Naive thymus-derived CD4-positive, alpha-beta T cell (primary cell): ENCODE measurements at regions of chr1 and their contacts with region 1.

Region 1: GRCh38 chr1:205812878-205813754 is at the start of gene SLC41A1:
- DNase-seq: peak; percentile 71 to 96 (median 91)
- ATAC-seq: peak; percentile 98
- H3K4me3 ChIP-seq: peak within 1 kb of the TSS; percentile 69
- H3K4me3 Mint-ChIP-seq: peak within 1 kb of the TSS; percentile 88 to 94 (median 92)
- H3K27ac ChIP-seq: peak within 1 kb of the TSS; percentile 87
- H3K27ac Mint-ChIP-seq: peak within 1 kb of the TSS; percentile 79 to 97 (median 92)
- H3K4me1 ChIP-seq: peaks cover 23 to 36% of the 10 kb centered on the region in 2 donors
- H3K4me1 Mint-ChIP-seq: peaks cover 38 to 63% (median 60%) of the 10 kb centered on the region in 7 donors
- H3K27me3 ChIP-seq: no peaks in the 10 kb centered on the region
- H3K27me3 Mint-ChIP-seq: peaks cover 0 to 15% (median 0%) of the 10 kb centered on the region in 5 donors
- total RNA-seq, gene SLC41A1: 16.5 to 32.0 (median 27.8) TPM

Region 2: GRCh38 chr1:205849619-205850355 is 36.7 kb after region 1 on chr1 and contains the start of gene PM20D1:
- CTCF ChIA-PET with region 1: interaction called, 3 read pairs
- POLR2A ChIA-PET with region 1: interaction called, 8 read pairs
- intact Hi-C with region 1: loop called (anchors 1 to 2 kb)
- DNase-seq: peak; percentile 48 to 90 (median 85)
- ATAC-seq: peak; percentile 98
- H3K4me3 ChIP-seq: peak within 1 kb of the TSS; percentile 31
- H3K4me3 Mint-ChIP-seq: peak within 1 kb of the TSS; percentile 83 to 98 (median 96)
- H3K27ac ChIP-seq: peak within 1 kb of the TSS; percentile 67
- H3K27ac Mint-ChIP-seq: peak within 1 kb of the TSS; percentile 82 to 99 (median 94)
- H3K4me1 ChIP-seq: no peaks in the 10 kb centered on the region
- H3K4me1 Mint-ChIP-seq: peaks cover 0 to 19% (median 7%) of the 10 kb centered on the region in 7 donors
- H3K27me3 ChIP-seq: no peaks in the 10 kb centered on the region
- H3K27me3 Mint-ChIP-seq: peaks cover 0 to 8% (median 0%) of the 10 kb centered on the region in 5 donors
- total RNA-seq, gene PM20D1: 0.92 to 2.7 (median 1.9) TPM

Region 3: DNA sequence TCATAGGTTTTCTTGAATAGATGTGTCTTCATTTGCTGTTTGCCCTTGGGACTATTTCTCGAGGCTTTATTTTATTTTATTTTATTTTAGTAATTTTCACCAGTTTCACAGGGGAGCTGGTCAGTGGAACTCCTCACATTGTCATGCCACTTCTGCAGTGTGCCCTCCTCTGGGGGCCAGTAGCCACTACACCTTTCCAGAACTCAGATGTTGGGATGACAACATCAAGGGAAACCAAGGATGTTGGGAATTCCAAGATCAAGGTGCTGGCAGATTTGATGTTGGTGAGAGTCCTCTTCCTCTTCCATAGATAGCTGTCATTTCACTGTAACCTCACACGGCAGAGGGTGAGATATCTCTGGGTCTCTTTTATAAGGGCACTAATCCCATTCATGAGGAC is 94.7 kb after region 1 on chr1:
- CTCF ChIA-PET with region 1: no interaction called
- POLR2A ChIA-PET with region 1: no interaction called
- intact Hi-C with region 1: loop called in 1 of 2 experiments (anchors 1 kb)
- DNase-seq: no peak
- ATAC-seq: no peak
- H3K4me3 ChIP-seq: no peak overlapping the region
- H3K4me3 Mint-ChIP-seq: no peak overlapping the region
- H3K27ac ChIP-seq: no peak overlapping the region
- H3K27ac Mint-ChIP-seq: no peak overlapping the region
- H3K4me1 ChIP-seq: no peaks in the 10 kb centered on the region
- H3K4me1 Mint-ChIP-seq: no peaks in the 10 kb centered on the region
- H3K27me3 ChIP-seq: no peaks in the 10 kb centered on the region
- H3K27me3 Mint-ChIP-seq: peaks cover 0 to 38% (median 5%) of the 10 kb centered on the region in 5 donors